ENCODE measurements at regions of chr17 and their contacts with region 1.

Region 1: DNA sequence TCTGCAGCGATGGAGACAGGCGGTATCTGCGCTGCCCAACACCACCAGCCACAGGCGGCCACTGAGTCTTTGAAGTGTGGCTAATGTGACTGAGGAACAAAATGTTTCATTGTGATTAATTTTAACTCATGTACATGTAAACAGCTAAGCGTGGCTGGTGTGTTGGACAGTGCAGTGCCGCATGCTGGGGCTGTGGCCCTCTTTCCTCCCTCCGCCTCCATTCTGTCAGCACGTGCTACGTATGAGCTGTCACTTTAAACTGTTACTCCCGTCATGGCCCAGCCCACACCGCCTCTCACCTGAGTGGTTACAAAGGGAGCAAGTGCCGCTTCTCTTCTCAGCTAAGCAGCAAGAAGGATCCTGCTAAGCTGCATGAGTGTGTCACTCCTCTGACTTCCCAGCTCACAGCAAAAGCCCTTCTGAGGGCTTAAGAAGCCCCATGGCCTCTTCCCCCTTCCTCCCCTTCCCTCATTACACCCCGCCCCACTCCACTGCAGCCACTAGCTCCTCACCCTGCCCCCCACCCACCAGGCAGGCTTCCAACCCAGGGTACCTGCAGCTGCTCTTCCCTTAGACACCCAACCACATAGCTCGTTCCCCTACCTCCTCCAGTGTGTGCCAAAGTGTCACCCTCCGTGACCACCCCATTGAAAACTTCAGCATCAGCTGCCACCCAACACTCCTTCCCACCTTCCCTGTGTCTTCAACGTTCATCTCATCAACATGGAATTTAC is 15.0 kb downstream of the HASPIN start:
- DNase-seq: peak; percentile 49
- H3K4me3 Mint-ChIP-seq: peak overlapping the region; percentile 21
- H3K27ac Mint-ChIP-seq: peak overlapping the region; percentile 67
- H3K4me1 Mint-ChIP-seq: peaks cover 50% of the 10 kb centered on the region
- H3K27me3 Mint-ChIP-seq: peaks cover 2% of the 10 kb centered on the region

Region 2: GRCh38 chr17:3683054-3683511 is 55.6 kb before region 1 on chr17:
- intact Hi-C with region 1: loop called (anchors 2 kb)
- DNase-seq: no peak
- H3K4me3 Mint-ChIP-seq: no peak overlapping the region
- H3K27ac Mint-ChIP-seq: peak overlapping the region; percentile 28
- H3K4me1 Mint-ChIP-seq: peaks cover 19% of the 10 kb centered on the region
- H3K27me3 Mint-ChIP-seq: no peaks in the 10 kb centered on the region

Region 3: DNA sequence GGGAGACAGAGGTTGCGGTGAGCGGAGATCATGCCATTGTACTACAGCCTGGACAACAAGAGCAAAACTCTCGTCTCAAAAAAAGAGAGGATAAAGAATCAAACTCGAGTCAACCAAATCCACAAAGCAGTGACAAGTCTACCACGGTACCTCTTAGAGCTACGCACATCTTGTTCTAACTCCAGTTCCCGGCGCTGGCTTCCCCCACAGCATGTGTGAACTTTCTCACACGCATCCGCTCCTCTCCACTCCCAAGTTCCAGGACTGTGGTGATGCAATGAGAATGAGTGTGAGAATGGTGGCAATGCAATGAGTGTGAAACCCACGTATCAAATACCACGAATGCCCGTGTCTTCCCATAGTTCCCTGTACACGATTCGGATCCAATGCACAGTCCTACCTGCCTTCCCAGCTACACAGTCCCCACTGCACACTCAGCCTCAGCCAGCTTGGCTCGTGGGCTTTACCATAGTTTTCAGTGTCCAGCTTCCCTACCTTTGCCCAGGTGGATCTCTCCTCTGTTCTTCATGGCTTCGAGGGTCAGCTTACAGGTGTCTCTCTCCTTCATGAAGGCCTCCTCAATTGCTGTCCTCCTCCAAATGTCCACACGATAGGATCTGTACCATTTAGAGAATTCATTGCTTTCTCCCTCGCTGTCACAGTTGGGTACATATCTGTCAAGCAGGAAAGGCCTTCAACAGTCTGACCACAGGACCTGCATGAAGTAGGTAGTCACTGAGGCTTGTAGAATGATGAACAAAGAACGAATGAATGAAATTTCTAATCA is 33.6 kb before region 1 on chr17:
- intact Hi-C with region 1: no loop called
- DNase-seq: no peak
- H3K4me3 Mint-ChIP-seq: no peak overlapping the region
- H3K27ac Mint-ChIP-seq: peak overlapping the region; percentile 4
- H3K4me1 Mint-ChIP-seq: peaks cover 24% of the 10 kb centered on the region
- H3K27me3 Mint-ChIP-seq: no peaks in the 10 kb centered on the region

Region 4: DNA sequence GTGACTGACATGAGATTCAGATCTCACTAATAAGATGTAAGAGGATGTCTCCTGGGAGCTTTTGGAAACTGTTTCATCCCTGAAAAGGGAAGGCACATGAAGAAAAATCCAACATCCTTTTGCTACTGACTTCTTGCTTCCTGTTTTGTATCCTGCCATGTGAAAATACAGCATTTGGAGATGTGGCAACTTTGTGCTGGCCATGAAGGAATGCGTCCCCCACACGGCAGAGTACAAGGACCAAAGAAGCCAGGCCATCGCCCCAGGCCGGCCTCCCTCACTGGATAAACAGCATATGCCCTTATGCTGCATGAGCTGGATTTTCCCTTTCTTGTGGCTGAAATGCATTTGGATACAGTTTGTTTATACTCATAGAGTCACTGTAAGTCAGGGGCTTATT is 20.5 kb before region 1 on chr17:
- intact Hi-C with region 1: no loop called
- DNase-seq: no peak
- H3K4me3 Mint-ChIP-seq: peak overlapping the region; percentile 56
- H3K27ac Mint-ChIP-seq: peak overlapping the region; percentile 67
- H3K4me1 Mint-ChIP-seq: peaks cover 79% of the 10 kb centered on the region
- H3K27me3 Mint-ChIP-seq: no peaks in the 10 kb centered on the region

Region 5: DNA sequence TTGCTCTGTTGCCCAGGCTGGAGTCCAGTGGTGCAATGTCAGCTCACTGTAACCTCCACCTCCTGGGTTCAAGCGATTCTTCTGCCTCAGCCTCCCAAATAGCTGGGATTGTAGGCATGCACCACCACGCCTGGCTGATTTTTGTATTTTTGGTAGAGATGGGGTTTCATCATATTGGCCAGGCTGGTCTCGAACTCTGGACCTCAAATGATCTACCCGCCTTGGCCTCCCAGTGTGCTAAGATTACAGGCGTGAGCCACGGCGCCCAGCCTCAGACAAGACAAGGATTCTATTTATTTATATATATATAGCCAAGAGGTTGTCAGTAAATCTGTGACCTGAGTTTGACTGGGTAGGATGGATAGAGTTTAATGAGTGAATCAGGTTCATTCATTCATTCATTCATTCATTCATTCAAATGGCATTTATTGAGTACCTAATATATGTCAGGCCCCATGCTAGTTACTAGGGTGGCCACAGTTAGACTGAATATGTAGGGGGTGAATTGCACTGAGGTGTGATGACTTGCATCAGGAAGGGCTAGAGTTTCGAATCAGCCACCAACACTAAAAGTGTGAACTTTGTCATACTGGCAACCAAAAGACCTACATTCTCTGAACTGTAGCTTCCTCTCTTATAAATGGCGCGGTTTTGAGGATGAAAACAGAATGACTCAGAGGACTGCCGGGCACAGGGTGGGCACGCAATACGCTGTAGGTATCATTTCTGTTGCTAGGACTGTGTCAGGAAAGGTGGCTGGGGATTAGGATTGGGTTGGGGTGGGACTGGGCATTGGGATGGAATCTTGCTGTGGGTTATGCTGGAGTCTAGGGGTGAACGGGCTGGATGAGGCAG is 24.4 kb after region 1 on chr17:
- intact Hi-C with region 1: loop called (anchors 1 kb)
- DNase-seq: peak; percentile 44
- H3K4me3 Mint-ChIP-seq: peak overlapping the region; percentile 71
- H3K27ac Mint-ChIP-seq: peak overlapping the region; percentile 96
- H3K4me1 Mint-ChIP-seq: peaks cover 51% of the 10 kb centered on the region
- H3K27me3 Mint-ChIP-seq: no peaks in the 10 kb centered on the region

Region 6: GRCh38 chr17:3804503-3804931 is 65.8 kb after region 1 on chr17:
- intact Hi-C with region 1: loop called (anchors 1 kb)
- DNase-seq: peak; percentile 10
- H3K4me3 Mint-ChIP-seq: no peak overlapping the region
- H3K27ac Mint-ChIP-seq: peak overlapping the region; percentile 44
- H3K4me1 Mint-ChIP-seq: peaks cover 26% of the 10 kb centered on the region
- H3K27me3 Mint-ChIP-seq: no peaks in the 10 kb centered on the region

Region 7: DNA sequence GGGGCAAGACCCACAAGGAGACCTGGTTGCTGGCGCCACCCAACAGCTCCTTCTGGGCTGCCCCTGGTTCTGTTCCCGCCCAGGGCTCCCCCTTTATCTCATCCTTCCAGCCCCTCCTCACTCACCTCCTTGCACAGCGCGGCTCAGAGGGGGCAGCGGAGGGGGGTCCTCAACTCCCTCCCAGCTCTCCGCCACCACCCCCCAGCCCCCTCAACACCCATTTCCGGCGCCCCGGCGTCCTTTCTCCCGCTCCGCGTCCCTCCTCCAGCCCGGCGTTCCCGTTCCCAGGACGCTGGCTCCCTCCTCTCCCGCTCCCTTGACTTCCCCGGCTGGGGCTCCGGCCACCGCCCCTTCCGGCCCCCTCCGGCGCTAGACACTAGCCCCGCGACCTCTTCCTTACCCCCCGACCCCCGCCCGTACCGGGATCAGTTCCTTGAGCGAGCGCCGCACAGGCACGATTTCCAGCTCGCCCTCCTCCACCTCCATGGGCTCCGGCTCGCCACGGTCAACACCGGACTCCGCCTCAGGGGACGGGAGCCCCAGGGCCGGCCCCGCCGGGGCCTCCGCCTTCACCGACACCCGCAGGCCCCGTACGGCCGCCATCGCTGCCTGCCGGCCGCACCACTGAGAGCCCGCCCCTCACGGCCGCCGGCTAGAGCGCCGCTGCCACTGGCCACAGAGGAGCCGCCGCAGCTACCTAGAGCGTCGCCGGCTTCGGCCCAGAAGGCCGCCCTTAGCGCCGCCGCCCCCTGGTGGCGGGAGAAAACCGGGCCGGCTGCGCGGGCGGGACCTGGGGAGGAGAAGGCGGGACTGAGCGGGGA is 107.1 kb after region 1 on chr17 and contains the start of gene NCBP3:
- intact Hi-C with region 1: loop called (anchors 1 kb)
- DNase-seq: peak; percentile 90
- H3K4me3 Mint-ChIP-seq: peak within 1 kb of the TSS; percentile 97
- H3K27ac Mint-ChIP-seq: peak within 1 kb of the TSS; percentile 97
- H3K4me1 Mint-ChIP-seq: peaks cover 16% of the 10 kb centered on the region
- H3K27me3 Mint-ChIP-seq: peaks cover 9% of the 10 kb centered on the region
- total RNA-seq, gene NCBP3: 54.2 and 56.0 TPM in 2 replicates

Measured in activated T-helper 1 cell treated with anti-CD3 and anti-CD28 coated beads, Interleukin-12 subunit alpha, Interleukin-12 subunit beta, Interleukin-2, Interleukin-4 antibody, amounts not matched to agents 30 ng/mL and 10 ng/mL and 1 ng/mL, durations not matched to agents 14 hours and 24 hours and 36 hours (primary cell).